Astrocyte of the cerebellum (primary cell): ENCODE measurements at regions of chr1 and their contacts with region 1.

Region 1: DNA sequence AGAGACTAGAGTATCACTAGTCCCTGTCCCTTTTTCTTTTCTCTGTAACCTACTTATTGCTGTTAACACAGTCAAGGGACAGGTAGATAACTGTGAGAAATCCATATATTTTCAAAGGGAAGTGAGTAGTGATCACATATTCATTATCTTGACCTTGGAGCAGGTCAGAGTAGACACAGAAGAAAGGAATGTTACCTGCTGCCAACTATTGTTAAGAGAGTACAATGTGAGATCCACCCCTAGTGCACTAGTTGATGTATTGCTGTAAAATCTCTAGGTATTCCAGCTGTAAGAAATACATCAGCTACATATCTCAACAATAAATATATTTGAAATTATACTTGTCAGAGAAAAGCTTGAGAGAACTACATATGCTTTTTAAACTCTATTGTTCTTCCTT is 68.7 kb upstream of the ADGRL2 start:
- DNase-seq: no peak
- H3K4me3 ChIP-seq: no peak overlapping the region
- CTCF ChIP-seq: no peak

Region 2: GRCh38 chr1:81484284-81484683 is 247.7 kb before region 1 on chr1:
- in situ Hi-C with region 1: no loop called
- DNase-seq: no peak
- H3K4me3 ChIP-seq: no peak overlapping the region
- CTCF ChIP-seq: no peak

Region 3: DNA sequence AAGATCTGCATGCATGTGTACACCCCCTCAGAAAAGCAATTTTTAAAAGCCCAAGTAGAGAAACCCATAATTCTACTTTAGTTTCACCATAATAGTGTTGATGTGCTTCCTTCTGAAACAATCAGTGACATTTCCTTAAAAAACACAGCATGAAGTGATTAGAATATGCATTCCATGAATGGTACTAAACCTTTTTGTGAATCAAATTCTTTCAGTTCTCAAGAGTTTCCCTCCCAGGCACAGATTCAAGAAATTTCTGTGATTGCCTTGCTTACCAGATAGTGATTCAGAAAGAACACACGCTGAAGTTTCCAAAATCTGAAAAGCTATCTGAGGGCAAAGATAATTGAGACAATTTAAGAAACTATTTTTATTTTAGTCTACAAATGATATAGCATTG is 67.6 kb before region 1 on chr1:
- in situ Hi-C with region 1: loop called (anchors 5 kb)
- DNase-seq: no peak
- H3K4me3 ChIP-seq: no peak overlapping the region
- CTCF ChIP-seq: no peak

Region 4: GRCh38 chr1:81780705-81781454 is 48.9 kb after region 1 on chr1:
- in situ Hi-C with region 1: no loop called
- DNase-seq: no peak
- H3K4me3 ChIP-seq: no peak overlapping the region
- CTCF ChIP-seq: no peak

Region 5: DNA sequence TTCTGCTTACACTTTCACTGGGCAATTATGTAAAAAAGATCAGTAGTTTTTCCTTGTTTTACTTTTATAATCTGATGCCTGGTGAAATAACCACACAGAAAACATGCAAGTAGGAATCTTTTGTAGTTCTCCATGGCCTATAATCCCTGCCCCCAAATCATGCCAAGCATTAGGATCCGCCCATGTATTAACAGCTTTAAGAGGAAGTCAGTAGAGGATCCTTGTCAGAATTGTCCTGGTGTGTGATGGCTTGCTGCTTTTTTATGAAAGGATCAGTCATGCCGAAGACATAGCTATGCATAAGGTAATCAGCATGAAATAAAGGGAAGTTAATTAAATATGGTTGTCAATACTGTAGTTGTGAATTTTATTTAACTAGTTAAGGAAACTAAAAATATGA is 88.8 kb after region 1 on chr1:
- in situ Hi-C with region 1: no loop called
- DNase-seq: no peak
- H3K4me3 ChIP-seq: no peak overlapping the region
- CTCF ChIP-seq: no peak